CD4-positive, alpha-beta T cell (primary cell): ENCODE measurements at regions of chr4 and their contacts with region 1.

Region 1: GRCh38 chr4:119184128-119184527 is 28.4 kb upstream of the USP53 start:
- DNase-seq: no peak
- ATAC-seq: no peak
- H3K4me3 ChIP-seq: no peak overlapping the region
- H3K4me3 Mint-ChIP-seq: no peak overlapping the region
- H3K27ac ChIP-seq: no peak overlapping the region
- H3K27ac Mint-ChIP-seq: no peak overlapping the region
- H3K4me1 ChIP-seq: no peaks in the 10 kb centered on the region
- H3K4me1 Mint-ChIP-seq: no peaks in the 10 kb centered on the region
- H3K27me3 ChIP-seq: no peaks in the 10 kb centered on the region
- H3K27me3 Mint-ChIP-seq: peaks cover 6% of the 10 kb centered on the region
- CTCF ChIP-seq: no peak

Region 2: DNA sequence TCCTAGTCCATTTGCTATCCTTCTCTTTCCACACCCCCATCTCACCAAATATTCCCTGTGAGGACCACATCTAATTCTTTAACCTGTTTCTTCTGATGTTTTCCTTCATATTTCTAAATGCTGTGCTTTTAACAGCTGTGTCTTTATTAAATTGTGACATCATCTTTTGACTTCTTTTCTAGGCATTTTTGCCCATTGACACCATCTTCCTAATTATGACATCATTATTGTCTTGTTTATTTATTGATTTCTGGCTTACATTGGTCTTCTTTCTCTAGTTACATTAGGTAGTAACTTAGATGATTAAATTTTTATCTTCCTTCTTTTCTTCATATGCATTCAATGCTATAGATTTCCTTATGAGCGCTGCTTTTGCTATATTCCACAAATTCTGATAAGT is 620.3 kb after region 1 on chr4:
- CTCF ChIA-PET with region 1: no interaction called
- POLR2A ChIA-PET with region 1: no interaction called
- intact Hi-C with region 1: loop called in 1 of 2 experiments (anchors 5 kb)
- DNase-seq: no peak
- ATAC-seq: no peak
- H3K4me3 ChIP-seq: no peak overlapping the region
- H3K4me3 Mint-ChIP-seq: no peak overlapping the region
- H3K27ac ChIP-seq: no peak overlapping the region
- H3K27ac Mint-ChIP-seq: no peak overlapping the region
- H3K4me1 ChIP-seq: no peaks in the 10 kb centered on the region
- H3K4me1 Mint-ChIP-seq: no peaks in the 10 kb centered on the region
- H3K27me3 ChIP-seq: no peaks in the 10 kb centered on the region
- H3K27me3 Mint-ChIP-seq: peaks cover 7% of the 10 kb centered on the region
- CTCF ChIP-seq: no peak